ENCODE measurements at regions of chr4 and their contacts with region 1.

Region 1: DNA sequence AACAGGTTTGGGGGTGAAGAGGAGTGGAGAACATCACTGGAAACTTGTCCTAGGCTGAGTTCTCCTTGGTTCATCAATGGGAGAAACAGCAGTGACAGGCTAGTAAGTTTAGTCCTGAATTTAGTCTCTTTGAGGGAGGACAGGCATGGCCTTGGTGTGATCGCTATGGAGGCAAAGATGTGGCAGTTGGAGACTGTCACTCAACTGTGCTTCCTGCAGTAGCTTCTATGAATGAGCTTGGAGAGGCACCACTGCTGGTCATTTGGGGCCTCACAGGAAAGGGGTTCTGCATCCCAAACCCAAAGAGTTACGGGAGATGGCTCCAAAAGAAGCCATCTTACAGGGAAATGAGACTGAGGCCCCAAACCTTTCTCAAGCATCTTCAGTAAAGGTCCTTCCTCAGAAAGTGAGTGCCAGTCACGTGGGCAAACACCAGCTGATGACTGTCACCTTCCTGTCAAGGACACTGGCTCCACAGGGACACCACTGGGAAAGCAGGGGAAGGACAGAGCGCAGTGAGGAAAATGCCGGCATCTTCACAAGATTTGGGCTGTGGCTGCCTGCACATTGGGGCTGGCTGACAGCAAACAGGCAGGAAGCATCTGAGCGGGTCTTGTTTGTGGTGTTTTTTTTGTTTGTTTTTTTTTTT is 7.2 kb downstream of the MRFAP1 start:
- DNase-seq: no peak
- ATAC-seq: no peak
- H3K4me3 Mint-ChIP-seq: no peak overlapping the region
- H3K27ac Mint-ChIP-seq: no peak overlapping the region
- H3K4me1 Mint-ChIP-seq: peaks cover 12% of the 10 kb centered on the region
- H3K27me3 Mint-ChIP-seq: no peaks in the 10 kb centered on the region
- CTCF ChIP-seq: no peak

Region 2: DNA sequence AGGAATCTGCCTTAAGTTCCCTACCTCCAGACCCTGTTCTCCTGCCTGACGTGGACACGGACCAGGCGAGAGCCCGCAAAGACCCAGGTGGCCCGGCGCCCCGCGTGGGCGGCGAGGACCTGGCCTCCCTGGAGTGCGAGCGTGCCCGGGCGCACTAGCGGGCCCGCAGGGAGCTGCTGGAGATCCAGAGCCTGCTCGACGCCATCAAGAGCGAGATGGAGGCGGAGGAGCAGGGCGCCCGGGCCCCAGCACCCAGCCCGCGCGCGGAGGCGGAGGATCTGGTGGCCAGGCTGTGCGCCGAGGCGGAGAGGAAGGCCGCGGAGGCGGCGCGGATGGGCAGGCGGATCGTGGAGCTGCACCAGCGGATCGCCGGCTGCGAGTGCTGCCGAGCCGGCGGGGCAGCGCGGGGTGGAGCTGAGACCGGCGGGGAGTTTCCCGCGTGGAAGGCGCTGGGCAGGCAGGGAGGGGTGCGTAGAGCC is 10.9 kb after region 1 on chr4:
- CTCF ChIA-PET with region 1: interaction called, 6 read pairs
- POLR2A ChIA-PET with region 1: interaction called, 19 read pairs
- intact Hi-C with region 1: no loop called
- DNase-seq: peak; percentile 59
- ATAC-seq: peak; percentile 84
- H3K4me3 Mint-ChIP-seq: peak overlapping the region; percentile 57
- H3K27ac Mint-ChIP-seq: no peak overlapping the region
- H3K4me1 Mint-ChIP-seq: peaks cover 6% of the 10 kb centered on the region
- H3K27me3 Mint-ChIP-seq: peaks cover 16% of the 10 kb centered on the region
- CTCF ChIP-seq: no peak